Uterus (tissue), 4 donors: ENCODE measurements at regions of chr2 and their contacts with region 1.

Region 1: DNA sequence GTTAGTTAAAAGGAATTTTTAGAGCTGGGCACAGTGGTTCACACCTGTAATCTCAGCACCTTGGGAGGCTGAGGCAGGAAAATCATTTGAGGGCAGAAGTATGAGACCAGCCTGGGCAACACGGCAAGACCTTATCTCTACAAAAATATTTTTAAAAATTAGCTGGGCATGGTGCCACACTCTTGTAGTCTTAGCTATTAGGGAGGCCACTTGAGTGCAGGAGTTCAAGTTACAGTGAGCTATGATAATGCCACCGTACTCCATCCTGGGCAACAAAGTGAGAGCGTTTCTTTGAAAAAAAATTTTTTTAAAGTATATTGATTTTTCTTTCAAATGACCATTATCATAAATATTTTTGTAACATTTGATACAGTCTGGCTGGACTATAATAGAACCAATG is 93.6 kb upstream of the FAM117B start:
- DNase-seq: no peak
- H3K4me3 ChIP-seq: no peak overlapping the region
- H3K27ac ChIP-seq: no peak overlapping the region
- H3K4me1 ChIP-seq: peaks cover 0 to 5% of the 10 kb centered on the region in 2 donors
- H3K27me3 ChIP-seq: no peaks in the 10 kb centered on the region
- CTCF ChIP-seq: no peak
- POLR2A ChIP-seq: no peak

Region 2: DNA sequence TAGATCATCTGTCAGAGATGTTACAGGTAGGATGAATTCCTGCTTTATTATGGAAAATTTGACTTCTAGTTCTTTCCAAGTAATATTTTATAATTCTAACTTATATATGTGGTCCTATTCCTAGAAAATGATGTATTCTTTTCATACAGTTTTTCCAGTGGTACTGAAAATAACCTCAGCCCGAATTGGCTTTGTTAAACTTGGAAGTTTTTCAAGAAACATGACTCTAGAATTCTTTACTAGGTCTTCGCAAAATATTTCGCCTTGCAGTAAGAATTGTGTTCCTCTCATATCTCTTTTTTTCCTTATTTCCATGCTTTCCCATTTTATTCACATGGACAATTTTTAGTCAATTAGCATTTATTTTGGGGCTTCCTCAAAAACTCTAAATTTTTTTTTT is 104.5 kb before region 1 on chr2:
- intact Hi-C with region 1: no loop called
- DNase-seq: no peak
- H3K4me3 ChIP-seq: no peak overlapping the region
- H3K27ac ChIP-seq: peak overlapping the region in 1 of 2 donors; percentile 35
- H3K4me1 ChIP-seq: no peaks in the 10 kb centered on the region
- H3K27me3 ChIP-seq: no peaks in the 10 kb centered on the region
- CTCF ChIP-seq: no peak
- POLR2A ChIP-seq: no peak

Region 3: DNA sequence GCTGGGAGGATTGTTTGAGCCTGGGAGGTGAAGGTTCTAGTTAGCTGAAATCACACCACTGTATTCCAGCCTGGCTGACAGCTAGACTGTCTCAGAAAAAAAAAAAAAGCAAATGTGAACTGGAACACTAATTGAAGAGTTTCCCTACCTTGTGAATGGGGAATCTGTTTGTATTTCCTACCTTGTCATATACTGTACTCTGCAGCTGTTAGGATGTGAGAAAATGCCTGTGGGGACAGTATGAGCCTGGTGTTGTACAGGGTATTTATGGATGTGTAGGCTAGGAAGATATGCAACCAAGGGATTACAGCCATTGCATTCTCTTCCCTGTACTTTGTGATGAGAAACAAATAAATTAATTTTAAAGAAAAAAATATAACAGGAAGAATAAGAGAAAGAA is 19.7 kb before region 1 on chr2:
- intact Hi-C with region 1: loop called (anchors 2 kb)
- DNase-seq: no peak
- H3K4me3 ChIP-seq: no peak overlapping the region
- H3K27ac ChIP-seq: no peak overlapping the region
- H3K4me1 ChIP-seq: no peaks in the 10 kb centered on the region
- H3K27me3 ChIP-seq: no peaks in the 10 kb centered on the region
- CTCF ChIP-seq: no peak
- POLR2A ChIP-seq: no peak